T-cell (primary cell): ENCODE measurements at regions of chr11 and their contacts with region 1.

Region 1: GRCh38 chr11:124644426-124645280 is 22.0 kb downstream of the TBRG1 start:
- DNase-seq: peak in 17 of 35 experiments; percentile 1 to 64 (median 8)
- ATAC-seq: peak; percentile 53 to 77 (median 66)
- H3K4me3 ChIP-seq: no peak overlapping the region
- H3K4me3 Mint-ChIP-seq: no peak overlapping the region
- H3K27ac ChIP-seq: no peak overlapping the region
- H3K27ac Mint-ChIP-seq: no peak overlapping the region
- H3K4me1 ChIP-seq: peaks cover 0 to 3% of the 10 kb centered on the region in 2 experiments
- H3K4me1 Mint-ChIP-seq: peaks cover 0 to 4% (median 3%) of the 10 kb centered on the region in 3 donors
- H3K27me3 ChIP-seq: no peaks in the 10 kb centered on the region
- H3K27me3 Mint-ChIP-seq: no peaks in the 10 kb centered on the region

Region 2: GRCh38 chr11:124656774-124657630 is 12.3 kb after region 1 on chr11:
- CTCF ChIA-PET with region 1: interaction called in 1 of 2 experiments, 6 read pairs
- POLR2A ChIA-PET with region 1: interaction called, 3 to 16 read pairs
- DNase-seq: no peak
- ATAC-seq: no peak
- H3K4me3 ChIP-seq: no peak overlapping the region
- H3K4me3 Mint-ChIP-seq: no peak overlapping the region
- H3K27ac ChIP-seq: no peak overlapping the region
- H3K27ac Mint-ChIP-seq: no peak overlapping the region
- H3K4me1 ChIP-seq: no peaks in the 10 kb centered on the region
- H3K4me1 Mint-ChIP-seq: no peaks in the 10 kb centered on the region
- H3K27me3 ChIP-seq: no peaks in the 10 kb centered on the region
- H3K27me3 Mint-ChIP-seq: no peaks in the 10 kb centered on the region

Region 3: DNA sequence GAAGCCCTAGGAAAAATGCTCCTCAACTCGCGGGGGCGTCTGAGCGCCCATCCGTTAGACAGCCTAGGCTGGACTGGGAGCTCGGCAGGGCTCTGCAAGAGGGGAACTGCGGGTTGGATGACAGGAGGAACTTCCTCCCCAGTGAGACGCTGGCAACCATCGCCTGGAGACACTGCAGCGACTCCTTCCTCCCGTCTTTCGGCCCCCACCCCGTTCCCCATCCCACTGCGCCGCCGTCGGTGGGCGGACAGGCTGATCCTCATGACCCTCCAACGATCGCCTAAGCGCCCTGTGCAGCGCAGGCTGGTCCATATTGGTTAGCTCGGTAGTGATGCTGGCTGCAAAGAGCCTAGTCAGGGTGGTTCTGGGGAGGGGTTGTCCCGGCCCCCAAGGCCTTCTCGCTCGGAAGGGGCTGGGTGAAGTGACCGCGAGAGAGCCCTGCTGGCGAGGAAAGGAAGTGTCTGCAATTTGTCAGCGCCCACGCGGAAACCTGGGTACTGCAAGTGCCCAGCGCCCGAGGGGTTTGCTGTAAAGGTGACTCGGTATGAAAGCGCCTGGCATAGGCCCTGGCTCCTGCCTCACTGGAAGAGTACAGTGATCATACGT is 95.7 kb after region 1 on chr11:
- CTCF ChIA-PET with region 1: interaction called in 1 of 2 experiments, 13 read pairs
- POLR2A ChIA-PET with region 1: no interaction called
- DNase-seq: peak in 27 of 35 experiments; percentile 30 to 72 (median 43)
- ATAC-seq: peak; percentile 39 to 54 (median 40)
- H3K4me3 ChIP-seq: peak overlapping the region; percentile 59 to 86
- H3K4me3 Mint-ChIP-seq: peak overlapping the region; percentile 74 to 86 (median 83)
- H3K27ac ChIP-seq: no peak overlapping the region
- H3K27ac Mint-ChIP-seq: no peak overlapping the region
- H3K4me1 ChIP-seq: peaks cover 8 to 20% of the 10 kb centered on the region in 2 experiments
- H3K4me1 Mint-ChIP-seq: peaks cover 18 to 22% (median 19%) of the 10 kb centered on the region in 3 donors
- H3K27me3 ChIP-seq: peaks cover 0 to 38% of the 10 kb centered on the region in 2 experiments
- H3K27me3 Mint-ChIP-seq: peaks cover 7 to 9% of the 10 kb centered on the region in 2 donors